Activated CD4-positive, alpha-beta T cell treated with anti-CD3 and anti-CD28 coated beads, Interleukin-2, amount 10 ng/mL, durations not matched to agents 24 days and 14 days (primary cell): ENCODE measurements at regions of chr3 and their contacts with region 1.

Region 1: GRCh38 chr3:146524961-146525360 is 19.4 kb downstream of the PLSCR1 start:
- DNase-seq: peak; percentile 36
- H3K4me3 Mint-ChIP-seq: no peak overlapping the region
- H3K27ac Mint-ChIP-seq: no peak overlapping the region
- H3K4me1 Mint-ChIP-seq: peaks cover 16% of the 10 kb centered on the region
- H3K27me3 Mint-ChIP-seq: no peaks in the 10 kb centered on the region

Region 2: GRCh38 chr3:146536696-146537095 is 11.7 kb after region 1 on chr3:
- intact Hi-C with region 1: loop called (anchors 2 kb)
- DNase-seq: peak; percentile 42
- H3K4me3 Mint-ChIP-seq: peak overlapping the region; percentile 39
- H3K27ac Mint-ChIP-seq: no peak overlapping the region
- H3K4me1 Mint-ChIP-seq: peaks cover 57% of the 10 kb centered on the region
- H3K27me3 Mint-ChIP-seq: no peaks in the 10 kb centered on the region

Region 3: DNA sequence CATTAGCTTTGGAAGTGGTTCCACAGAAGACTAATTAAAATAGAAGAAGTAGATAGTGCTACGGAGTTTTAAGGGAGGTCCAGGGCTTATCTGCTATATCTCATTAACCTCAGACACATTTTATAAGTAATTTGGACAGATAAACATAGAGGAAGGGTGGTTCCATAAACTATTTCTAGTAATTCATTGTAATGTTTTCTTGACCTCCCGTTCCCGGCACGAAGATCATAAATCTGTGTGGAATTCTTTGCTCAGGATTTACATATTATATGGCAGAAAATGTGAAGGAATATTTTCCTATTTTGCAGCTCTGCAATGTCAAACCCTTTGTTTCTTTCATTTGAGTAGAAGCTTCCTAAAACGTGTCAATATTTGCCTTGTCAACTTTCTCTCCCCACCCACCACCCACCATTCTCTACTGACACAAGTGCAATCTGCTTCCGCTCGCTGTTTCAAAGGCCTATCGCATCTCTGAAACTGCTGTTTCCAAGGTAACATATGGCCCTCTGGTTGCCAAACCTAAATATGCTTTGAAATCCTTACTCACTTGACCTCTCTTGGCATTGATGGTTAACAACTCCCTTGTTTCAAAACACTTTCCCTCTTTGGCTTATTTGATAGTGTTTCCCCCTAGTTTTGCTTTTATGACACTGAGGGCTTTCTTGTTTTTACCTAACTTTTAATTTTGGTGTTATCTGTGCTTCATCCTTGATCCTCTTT is 101.6 kb after region 1 on chr3:
- intact Hi-C with region 1: no loop called
- DNase-seq: no peak
- H3K4me3 Mint-ChIP-seq: no peak overlapping the region
- H3K27ac Mint-ChIP-seq: no peak overlapping the region
- H3K4me1 Mint-ChIP-seq: peaks cover 1% of the 10 kb centered on the region
- H3K27me3 Mint-ChIP-seq: no peaks in the 10 kb centered on the region